AG04449 (cell line): ENCODE measurements at regions of chr11 and their contacts with region 1.

Region 1: GRCh38 chr11:129375751-129376657 is at the start of gene BARX2:
- DNase-seq: no peak
- H3K4me3 ChIP-seq: no peak within 1 kb of the TSS
- CTCF ChIP-seq: peak; percentile 59

Region 2: GRCh38 chr11:129352676-129353075 is 23.3 kb before region 1 on chr11:
- CTCF ChIA-PET with region 1: no interaction called
- POLR2A ChIA-PET with region 1: no interaction called
- DNase-seq: no peak
- H3K4me3 ChIP-seq: no peak overlapping the region
- CTCF ChIP-seq: no peak

Region 3: DNA sequence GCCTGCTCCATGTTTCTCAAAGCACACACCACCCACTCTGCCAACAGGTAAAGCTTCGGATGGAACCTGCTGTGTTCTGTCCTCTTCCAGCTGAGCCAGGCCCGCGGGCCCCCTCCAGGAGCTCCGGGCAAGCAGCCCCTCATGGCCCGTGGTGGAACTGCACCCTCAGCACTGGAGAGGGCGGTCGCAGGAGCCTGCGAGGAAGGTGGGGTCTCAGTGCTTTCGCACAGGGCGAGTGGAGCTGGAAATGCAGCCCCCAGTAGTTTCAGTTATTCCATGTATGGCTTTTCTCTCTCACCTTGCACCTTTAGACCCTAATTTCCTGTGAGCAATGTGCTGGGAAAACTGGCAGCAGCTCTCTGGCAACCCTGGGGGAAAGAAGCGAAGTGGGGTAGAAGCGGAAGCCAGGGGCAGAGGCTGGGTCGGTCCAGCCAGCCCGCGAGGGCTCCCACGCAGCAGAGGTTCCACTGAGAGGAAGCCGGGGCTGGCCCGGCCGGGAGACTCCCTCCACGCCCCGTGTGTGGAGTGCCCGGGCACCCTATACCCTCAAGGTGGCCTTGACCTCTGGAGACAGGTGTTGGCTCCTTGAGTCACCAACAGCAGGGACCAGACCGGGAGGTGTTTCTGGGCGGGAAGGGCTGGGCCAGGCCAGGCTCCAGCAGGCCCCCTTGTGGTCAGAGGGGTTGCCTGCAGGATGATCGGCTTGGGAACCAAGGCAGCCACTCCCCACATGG is 319.7 kb after region 1 on chr11:
- CTCF ChIA-PET with region 1: interaction called, 23 read pairs
- POLR2A ChIA-PET with region 1: no interaction called
- DNase-seq: no peak
- H3K4me3 ChIP-seq: peak overlapping the region; percentile 2
- CTCF ChIP-seq: peak; percentile 78

Region 4: DNA sequence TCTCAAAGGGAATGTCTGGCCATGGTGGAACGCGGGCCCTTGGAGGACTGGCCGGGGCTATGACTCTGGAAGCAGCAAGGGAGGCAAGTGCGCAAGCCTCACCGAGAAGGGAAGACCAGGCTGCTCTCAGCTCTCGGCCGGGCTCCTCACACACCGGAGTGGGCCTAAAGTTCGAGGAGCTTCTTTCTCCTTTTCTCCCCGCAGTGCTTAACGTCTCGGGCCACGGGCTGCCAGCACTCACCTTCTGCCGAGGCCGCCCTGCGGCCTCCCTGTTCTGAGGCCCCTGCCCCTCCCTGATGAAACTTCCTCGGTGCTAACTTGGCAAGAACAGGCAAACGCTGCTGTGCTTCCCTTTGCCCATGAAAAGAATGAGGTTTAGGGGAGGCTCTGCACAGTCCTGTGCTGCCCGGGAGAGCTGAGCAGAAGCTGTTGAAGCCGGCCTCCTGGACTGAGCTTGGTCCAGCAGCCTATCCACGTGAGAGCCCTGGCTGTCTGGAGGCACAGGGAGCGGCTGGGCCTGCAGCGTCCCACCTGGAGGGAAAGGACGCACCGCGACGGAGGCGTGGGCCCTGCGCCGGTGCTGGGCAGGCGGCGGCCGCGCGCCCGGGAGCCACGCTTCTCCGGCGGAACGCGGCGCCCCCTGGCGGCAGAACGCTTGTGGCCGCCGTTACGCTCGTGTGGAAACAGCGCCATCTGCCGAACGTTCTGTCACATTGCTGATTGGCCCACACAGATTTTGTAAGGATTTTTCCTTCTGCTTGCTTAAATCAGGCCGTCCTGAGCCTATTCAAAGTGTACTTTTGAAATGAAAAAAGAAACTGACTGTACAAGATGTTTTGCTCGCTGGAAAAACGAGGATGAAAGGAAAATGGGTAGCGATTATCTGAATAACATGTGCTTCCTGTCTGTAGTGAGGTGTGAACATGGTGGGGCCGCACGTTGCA is 374.6 kb after region 1 on chr11:
- CTCF ChIA-PET with region 1: interaction called, 50 read pairs
- POLR2A ChIA-PET with region 1: no interaction called
- DNase-seq: no peak
- H3K4me3 ChIP-seq: peak overlapping the region; percentile 42
- CTCF ChIP-seq: peak; percentile 88